Panc1 (cell line): ENCODE measurements at regions of chr1 and their contacts with region 1.

Region 1: GRCh38 chr1:10569531-10569930 is 94.8 kb downstream of the PEX14 start:
- DNase-seq: no peak
- ATAC-seq: no peak
- H3K4me3 ChIP-seq: no peak overlapping the region
- H3K27ac ChIP-seq: no peak overlapping the region
- H3K4me1 ChIP-seq: peaks cover 9% of the 10 kb centered on the region; the same call in 1 of the 2 replicates
- H3K27me3 ChIP-seq: no peaks in the 10 kb centered on the region
- CTCF ChIP-seq: no peak

Region 2: DNA sequence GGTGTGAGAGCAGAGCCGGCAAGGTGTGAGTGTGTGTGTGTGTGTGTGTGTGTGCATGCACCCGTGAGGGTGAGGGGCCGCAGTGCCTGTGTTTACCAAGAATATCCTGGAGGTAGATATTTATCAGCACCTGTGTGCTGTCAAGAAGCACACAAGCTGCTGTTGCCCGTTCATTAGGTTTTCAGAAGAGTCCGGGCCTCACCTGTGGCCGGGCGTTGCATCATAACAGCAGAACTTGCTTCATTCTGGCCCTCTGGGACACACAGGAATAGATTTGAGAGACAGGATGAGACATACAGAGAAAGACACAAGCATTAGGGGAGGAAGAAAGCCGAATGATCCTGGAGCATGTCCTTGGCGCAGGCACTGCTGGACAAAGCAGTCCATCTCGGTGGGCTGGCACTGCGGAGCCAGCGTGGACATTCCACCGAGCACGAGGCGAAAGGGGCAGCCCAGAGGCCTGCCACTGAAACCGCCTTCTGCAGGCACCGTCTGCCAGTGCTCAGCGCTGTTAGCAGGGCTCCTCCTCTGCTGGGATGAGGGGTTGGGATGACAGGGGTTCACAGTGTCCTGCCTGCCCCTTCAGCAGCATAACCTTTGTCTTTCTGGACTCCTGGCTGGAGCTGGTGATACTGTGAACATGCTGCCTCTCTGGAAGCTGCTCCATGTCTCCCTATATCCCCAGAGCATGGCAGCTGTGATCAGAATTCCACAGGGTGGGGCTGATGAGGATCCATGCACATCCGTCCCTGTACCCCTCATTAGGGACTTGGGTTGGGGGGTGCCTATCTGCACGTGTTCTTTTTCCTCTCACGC is 13.7 kb before region 1 on chr1:
- CTCF ChIA-PET with region 1: no interaction called
- POLR2A ChIA-PET with region 1: no interaction called
- in situ Hi-C with region 1: no loop called
- intact Hi-C with region 1: no loop called
- DNase-seq: no peak
- ATAC-seq: peak; percentile 69
- H3K4me3 ChIP-seq: no peak overlapping the region
- H3K27ac ChIP-seq: no peak overlapping the region; the same call in 1 of the 2 replicates
- H3K4me1 ChIP-seq: 0 out of 2 replicates have a peak, but pooled peaks cover 7% of the 10 kb centered on the region
- H3K27me3 ChIP-seq: no peaks in the 10 kb centered on the region
- CTCF ChIP-seq: no peak

Region 3: GRCh38 chr1:10663678-10664035 is 94.1 kb after region 1 on chr1:
- CTCF ChIA-PET with region 1: no interaction called
- POLR2A ChIA-PET with region 1: no interaction called
- in situ Hi-C with region 1: no loop called
- intact Hi-C with region 1: no loop called
- DNase-seq: no peak
- ATAC-seq: peak; percentile 35; the same call in 1 of the 2 replicates
- H3K4me3 ChIP-seq: no peak overlapping the region
- H3K27ac ChIP-seq: no peak overlapping the region
- H3K4me1 ChIP-seq: no peaks in the 10 kb centered on the region
- H3K27me3 ChIP-seq: no peaks in the 10 kb centered on the region
- CTCF ChIP-seq: no peak

Region 4: DNA sequence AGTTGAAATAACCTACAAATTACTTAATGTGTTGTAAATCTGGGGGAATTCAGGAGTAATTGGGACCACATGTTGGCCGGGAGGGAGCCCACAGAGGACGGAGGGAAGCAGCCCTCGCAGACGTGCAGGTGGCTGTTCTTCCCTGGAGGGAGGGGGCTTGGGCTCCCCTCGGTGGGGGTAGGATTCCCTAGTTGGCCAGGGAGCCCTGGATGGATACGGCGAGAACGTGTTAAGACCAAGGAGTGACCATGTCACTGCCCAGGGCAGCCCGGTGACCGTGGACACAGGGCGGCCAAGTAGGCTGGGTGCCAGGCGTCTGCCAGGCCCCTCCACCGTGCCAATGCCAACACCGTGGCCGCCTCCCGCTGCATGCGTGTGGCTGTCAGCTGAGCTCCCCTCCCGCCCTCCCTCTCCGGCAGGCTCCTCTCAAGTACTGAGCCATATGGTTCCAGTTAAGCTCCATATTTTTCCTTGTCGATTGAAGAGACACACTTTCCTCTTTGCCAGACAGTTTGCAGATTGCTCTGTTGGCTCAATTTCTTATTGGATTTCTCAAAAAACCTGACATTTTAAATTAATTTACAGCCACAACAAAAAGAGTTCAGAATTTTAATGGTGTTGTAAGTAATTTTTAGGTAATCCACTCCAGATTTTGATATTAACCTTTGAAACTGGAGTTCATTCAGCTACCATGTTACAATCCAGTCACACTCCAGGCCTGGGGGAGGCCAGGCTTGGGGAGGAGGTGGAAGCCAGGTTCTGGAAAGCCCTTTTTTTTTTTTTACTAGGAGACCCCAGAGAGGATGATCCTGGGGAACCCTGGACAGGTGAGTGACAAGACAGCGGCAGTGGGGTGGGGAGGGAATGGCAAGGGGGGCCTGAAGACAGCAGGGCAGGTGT is 155.7 kb after region 1 on chr1:
- CTCF ChIA-PET with region 1: no interaction called
- POLR2A ChIA-PET with region 1: no interaction called
- in situ Hi-C with region 1: no loop called
- intact Hi-C with region 1: loop called (anchors 5 kb)
- DNase-seq: no peak
- ATAC-seq: no peak
- H3K4me3 ChIP-seq: no peak overlapping the region
- H3K27ac ChIP-seq: peak overlapping the region; percentile 51
- H3K4me1 ChIP-seq: peaks cover 66% of the 10 kb centered on the region
- H3K27me3 ChIP-seq: no peaks in the 10 kb centered on the region
- CTCF ChIP-seq: no peak